Mammary epithelial cell (primary cell): ENCODE measurements at regions of chr19 and their contacts with region 1.

Region 1: GRCh38 chr19:1205114-1206062 is at the start of gene STK11:
- DNase-seq: peak; percentile 98
- H3K4me3 ChIP-seq: peak within 1 kb of the TSS; percentile 85 to 91 (median 89)
- H3K27ac ChIP-seq: peak within 1 kb of the TSS; percentile 56
- H3K4me1 ChIP-seq: peaks cover 24% of the 10 kb centered on the region
- H3K27me3 ChIP-seq: no peaks in the 10 kb centered on the region
- CTCF ChIP-seq: no peak
- total RNA-seq, gene STK11: 57.7 to 67.5 TPM

Region 2: DNA sequence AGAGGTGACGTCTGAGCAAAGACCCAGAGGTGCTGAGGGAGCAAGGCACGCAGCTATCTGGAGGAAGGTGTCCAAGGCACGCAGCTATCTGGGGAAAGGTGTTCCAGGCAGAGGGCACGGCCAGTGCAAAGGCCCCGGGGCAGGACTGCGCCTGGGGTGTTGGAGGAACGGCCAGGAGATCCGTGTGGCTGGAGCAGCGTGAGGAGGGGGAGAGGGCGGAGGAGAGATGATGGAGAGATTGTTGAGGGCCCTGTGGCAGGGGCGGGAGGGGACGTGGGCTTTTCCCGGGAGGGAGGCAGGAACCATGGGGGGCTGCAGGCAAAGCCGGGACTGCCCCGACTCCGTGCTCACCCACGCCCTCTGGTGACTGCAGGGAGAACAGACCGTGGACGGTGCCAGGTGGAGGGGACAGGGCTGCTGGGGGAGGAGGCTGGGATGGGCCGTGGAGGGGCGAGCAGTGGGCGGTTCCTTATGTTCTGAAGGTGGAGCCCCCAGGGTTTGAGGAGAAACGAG is 467.8 kb before region 1 on chr19:
- CTCF ChIA-PET with region 1: no interaction called
- dilution Hi-C with region 1: no loop called
- in situ Hi-C with region 1: no loop called
- intact Hi-C with region 1: no loop called
- DNase-seq: no peak
- H3K4me3 ChIP-seq: no peak overlapping the region
- H3K27ac ChIP-seq: no peak overlapping the region
- H3K4me1 ChIP-seq: no peaks in the 10 kb centered on the region
- H3K27me3 ChIP-seq: no peaks in the 10 kb centered on the region
- CTCF ChIP-seq: peak; percentile 47 to 63

Region 3: GRCh38 chr19:1064661-1065605 is 140.5 kb before region 1 on chr19:
- CTCF ChIA-PET with region 1: no interaction called
- dilution Hi-C with region 1: no loop called
- in situ Hi-C with region 1: no loop called
- intact Hi-C with region 1: no loop called
- DNase-seq: peak; percentile 52
- H3K4me3 ChIP-seq: no peak overlapping the region
- H3K27ac ChIP-seq: no peak overlapping the region
- H3K4me1 ChIP-seq: peaks cover 30% of the 10 kb centered on the region
- H3K27me3 ChIP-seq: no peaks in the 10 kb centered on the region
- CTCF ChIP-seq: peak; percentile 55 to 71

Region 4: GRCh38 chr19:1103708-1104310 is 101.6 kb before region 1 on chr19 and contains the start of gene GPX4:
- CTCF ChIA-PET with region 1: no interaction called
- dilution Hi-C with region 1: no loop called
- in situ Hi-C with region 1: loop called in 1 of 2 experiments (anchors 5 kb)
- intact Hi-C with region 1: no loop called
- DNase-seq: peak; percentile 99
- H3K4me3 ChIP-seq: peak within 1 kb of the TSS; percentile 71 to 75 (median 74)
- H3K27ac ChIP-seq: peak within 1 kb of the TSS; percentile 79
- H3K4me1 ChIP-seq: peaks cover 47% of the 10 kb centered on the region
- H3K27me3 ChIP-seq: no peaks in the 10 kb centered on the region
- CTCF ChIP-seq: no peak
- total RNA-seq, gene GPX4: 154 to 216 TPM